PC-9 (cell line): ENCODE measurements at regions of chr16 and their contacts with region 1.

Region 1: DNA sequence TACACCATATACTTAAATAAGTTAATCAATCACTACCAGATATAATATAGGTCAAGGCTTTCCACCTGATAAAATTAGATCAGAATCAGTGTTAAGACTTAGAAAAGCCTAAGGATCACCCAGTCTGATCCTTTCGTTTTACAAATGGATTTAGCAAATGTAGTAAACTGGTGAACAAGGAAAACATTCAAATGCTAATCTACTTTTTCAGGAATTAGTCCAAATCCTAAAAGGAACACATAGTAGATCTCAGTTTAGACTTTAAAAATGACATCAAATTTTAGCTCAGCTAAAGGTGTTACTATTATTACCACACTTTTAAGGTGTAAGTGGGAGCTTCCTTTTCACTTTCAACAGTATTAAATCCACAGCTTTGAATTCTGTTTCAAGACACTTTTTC is 12.0 kb downstream of the PHLPP2 start:
- DNase-seq: no peak
- H3K4me3 ChIP-seq: no peak overlapping the region
- H3K27ac ChIP-seq: no peak overlapping the region
- H3K4me1 ChIP-seq: peaks cover 34% of the 10 kb centered on the region
- H3K27me3 ChIP-seq: no peaks in the 10 kb centered on the region
- CTCF ChIP-seq: no peak

Region 2: GRCh38 chr16:71681360-71681980 is 31.0 kb before region 1 on chr16:
- CTCF ChIA-PET with region 1: no interaction called
- POLR2A ChIA-PET with region 1: interaction called, 10 read pairs
- intact Hi-C with region 1: no loop called
- DNase-seq: no peak
- H3K4me3 ChIP-seq: no peak overlapping the region
- H3K27ac ChIP-seq: no peak overlapping the region
- H3K4me1 ChIP-seq: no peaks in the 10 kb centered on the region
- H3K27me3 ChIP-seq: no peaks in the 10 kb centered on the region
- CTCF ChIP-seq: no peak

Region 3: DNA sequence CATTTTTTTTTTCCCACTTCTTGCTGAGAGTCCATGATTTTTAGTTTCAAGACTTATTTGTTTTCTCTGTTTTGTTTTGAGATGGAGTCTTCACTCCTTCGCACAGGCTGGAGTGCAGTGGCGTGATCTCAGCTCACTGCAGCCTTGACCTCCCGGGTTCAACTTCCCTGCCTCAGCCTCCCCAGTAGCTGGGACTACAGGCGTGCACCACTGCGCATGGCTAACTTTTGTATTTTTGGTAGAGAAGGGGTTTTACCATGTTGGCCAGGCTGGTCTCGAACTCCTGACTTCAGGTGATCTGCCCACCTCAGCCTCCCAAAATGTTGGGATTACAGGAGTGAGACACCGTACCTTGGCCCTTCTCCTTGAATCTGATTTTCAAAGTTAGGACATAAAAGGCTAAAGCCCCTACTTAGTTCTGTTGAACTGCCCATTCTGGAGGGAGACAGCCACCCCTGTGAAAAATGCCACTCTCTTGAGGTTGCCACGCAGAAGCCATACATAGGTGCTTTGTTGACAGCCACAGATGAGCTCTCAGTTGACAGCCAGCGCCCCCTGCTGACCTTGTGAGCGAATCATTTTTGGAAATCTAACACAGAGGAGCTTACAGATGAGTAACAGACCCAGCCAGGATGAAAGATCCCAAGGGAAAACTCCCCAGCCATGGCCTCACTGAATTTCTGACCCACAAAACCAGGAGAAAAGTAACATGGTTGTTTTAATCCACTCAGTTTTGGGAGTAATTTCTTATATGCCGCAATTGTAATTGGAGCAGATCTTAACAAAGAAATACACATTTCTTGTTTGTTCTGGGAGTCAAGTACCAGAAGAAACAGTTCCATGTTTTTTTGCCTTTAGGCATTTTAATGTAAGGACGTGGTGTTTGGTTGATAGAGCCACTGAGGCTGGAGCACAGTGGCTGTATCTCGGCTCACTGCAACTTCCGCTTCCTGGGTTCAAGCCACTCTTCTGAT is 248.9 kb after region 1 on chr16:
- CTCF ChIA-PET with region 1: no interaction called
- POLR2A ChIA-PET with region 1: no interaction called
- intact Hi-C with region 1: no loop called
- DNase-seq: peak; percentile 48 to 75
- H3K4me3 ChIP-seq: no peak overlapping the region
- H3K27ac ChIP-seq: no peak overlapping the region
- H3K4me1 ChIP-seq: no peaks in the 10 kb centered on the region
- H3K27me3 ChIP-seq: no peaks in the 10 kb centered on the region
- CTCF ChIP-seq: peak; percentile 89

Region 4: DNA sequence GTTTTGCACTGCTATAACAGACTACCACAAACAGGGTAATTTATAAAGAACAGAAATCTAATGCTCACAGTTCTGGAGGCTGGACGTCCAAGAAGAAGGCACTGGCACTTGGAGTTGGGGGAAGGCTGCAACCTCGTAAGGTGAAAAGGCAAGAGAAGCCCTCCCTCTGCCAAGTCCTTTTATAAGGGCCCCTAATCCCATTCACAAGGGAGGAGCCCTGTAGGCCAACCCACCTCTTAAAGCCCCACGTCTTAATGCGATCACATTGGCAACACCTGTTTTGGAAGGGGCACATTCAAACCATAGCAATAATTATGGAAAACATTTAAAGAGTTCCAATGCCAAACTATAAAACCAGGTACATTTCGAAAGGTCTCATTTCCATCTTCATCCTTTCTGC is 282.5 kb after region 1 on chr16:
- CTCF ChIA-PET with region 1: no interaction called
- POLR2A ChIA-PET with region 1: no interaction called
- intact Hi-C with region 1: no loop called
- DNase-seq: no peak
- H3K4me3 ChIP-seq: no peak overlapping the region
- H3K27ac ChIP-seq: no peak overlapping the region
- H3K4me1 ChIP-seq: no peaks in the 10 kb centered on the region
- H3K27me3 ChIP-seq: peaks cover 6% of the 10 kb centered on the region; the same call in 1 of the 2 replicates
- CTCF ChIP-seq: no peak